PC-9 (cell line): ENCODE measurements at regions of chr19 and their contacts with region 1.

Region 1: GRCh38 chr19:40425450-40426287 is at the start of gene SERTAD1:
- DNase-seq: peak; percentile 96 to 99
- H3K4me3 ChIP-seq: peak within 1 kb of the TSS; percentile 87
- H3K27ac ChIP-seq: peak within 1 kb of the TSS; percentile 92
- H3K4me1 ChIP-seq: peaks cover 12% of the 10 kb centered on the region
- H3K27me3 ChIP-seq: no peaks in the 10 kb centered on the region
- CTCF ChIP-seq: peak; percentile 81
- total RNA-seq, gene SERTAD1: 7.8 and 8.5 TPM in 2 replicates

Region 2: GRCh38 chr19:40381321-40381720 is 44.3 kb before region 1 on chr19:
- CTCF ChIA-PET with region 1: no interaction called
- POLR2A ChIA-PET with region 1: no interaction called
- intact Hi-C with region 1: no loop called
- DNase-seq: no peak
- H3K4me3 ChIP-seq: no peak overlapping the region
- H3K27ac ChIP-seq: no peak overlapping the region
- H3K4me1 ChIP-seq: no peaks in the 10 kb centered on the region
- H3K27me3 ChIP-seq: no peaks in the 10 kb centered on the region
- CTCF ChIP-seq: no peak; the same call in 1 of the 2 replicates

Region 3: DNA sequence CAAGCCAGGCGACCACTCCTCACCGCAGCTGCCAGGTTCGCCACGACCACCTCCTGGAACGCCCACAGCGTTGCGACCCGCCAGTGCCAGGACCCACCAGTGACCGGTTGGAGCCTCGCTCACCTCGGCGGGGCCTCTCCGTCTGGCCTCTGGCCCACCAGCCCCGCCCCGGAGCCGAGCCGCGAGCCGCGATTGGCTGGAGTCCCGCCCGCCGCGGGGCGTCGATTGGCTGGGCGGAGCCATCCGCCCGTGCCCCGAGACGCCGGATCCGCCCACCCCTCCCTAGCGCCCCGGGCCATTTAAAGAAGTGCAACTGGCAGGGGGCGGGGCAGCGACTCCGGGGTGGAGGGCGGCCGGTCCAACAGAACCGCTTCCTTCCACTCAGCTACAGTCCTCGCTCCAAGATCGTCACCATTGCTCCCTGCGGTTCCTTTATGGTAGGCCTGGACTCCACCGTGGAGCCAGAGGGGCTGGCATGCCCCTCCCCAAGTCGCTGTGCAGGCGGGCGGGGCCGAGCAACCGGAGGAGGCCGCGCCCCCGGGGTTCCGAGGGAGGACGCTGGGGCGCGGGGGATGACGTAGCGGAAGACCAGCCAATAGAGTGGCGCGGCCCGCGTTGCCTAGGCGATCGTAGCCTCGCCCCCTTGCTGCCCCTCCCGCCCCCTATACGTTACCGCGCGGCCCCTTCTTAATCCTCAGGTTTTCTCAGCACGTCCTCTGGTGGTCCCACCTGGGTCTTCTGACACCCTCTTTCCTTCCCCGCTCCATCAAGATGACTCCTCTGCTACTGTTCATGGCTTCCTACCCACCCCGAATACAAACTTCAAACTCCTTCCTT is 18.7 kb after region 1 on chr19 and contains the start of gene SERTAD3:
- CTCF ChIA-PET with region 1: interaction called, 12 read pairs
- POLR2A ChIA-PET with region 1: interaction called, 12 read pairs
- intact Hi-C with region 1: loop called (anchors 1 kb)
- DNase-seq: peak; percentile 75 to 98
- H3K4me3 ChIP-seq: peak within 1 kb of the TSS; percentile 75
- H3K27ac ChIP-seq: peak within 1 kb of the TSS; percentile 70
- H3K4me1 ChIP-seq: peaks cover 12% of the 10 kb centered on the region
- H3K27me3 ChIP-seq: no peaks in the 10 kb centered on the region
- CTCF ChIP-seq: no peak
- total RNA-seq, gene SERTAD3: 35.9 and 41.4 TPM in 2 replicates

Region 4: DNA sequence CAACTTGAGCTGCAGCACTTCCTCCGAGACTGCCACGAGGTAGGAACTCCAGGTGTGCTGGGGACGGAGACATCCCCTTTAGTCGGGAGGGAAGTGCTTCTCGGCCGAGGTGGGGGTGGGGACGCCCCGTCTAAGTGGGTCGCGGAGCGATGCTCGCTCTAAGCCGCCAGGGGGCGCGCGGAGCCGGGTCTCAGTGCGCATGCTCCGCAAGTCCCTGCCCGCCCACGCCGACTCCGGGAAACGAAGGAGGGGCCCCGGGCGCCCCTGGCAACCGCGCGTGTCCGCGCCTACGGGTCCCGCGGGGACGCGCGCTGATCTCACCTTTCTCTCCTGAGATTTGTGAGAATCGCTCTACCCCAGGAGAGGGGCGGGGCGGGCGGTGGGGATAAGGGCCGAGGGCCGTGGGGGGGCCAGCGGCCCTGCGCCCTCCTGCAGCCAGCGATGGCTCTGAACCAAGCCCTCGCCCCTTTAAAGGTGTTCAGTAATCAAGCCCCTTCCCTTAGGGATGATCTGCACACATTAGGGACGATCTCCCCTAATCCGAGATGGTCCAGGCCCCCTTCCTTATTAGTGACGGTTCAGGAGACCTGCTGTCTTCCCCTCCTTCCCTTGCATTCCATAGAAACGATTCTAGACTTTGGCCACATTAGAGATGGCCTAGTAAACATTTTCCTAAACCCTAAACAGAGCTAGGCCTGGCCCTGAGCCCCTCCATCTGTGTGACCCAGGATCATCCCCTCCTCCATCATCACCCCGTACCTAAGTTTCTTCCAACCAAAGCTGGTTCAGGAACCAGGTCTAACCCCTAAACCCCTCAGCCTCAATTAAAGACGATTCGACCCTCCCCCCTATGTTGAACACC is 103.7 kb after region 1 on chr19:
- CTCF ChIA-PET with region 1: no interaction called
- POLR2A ChIA-PET with region 1: interaction called, 3 read pairs
- intact Hi-C with region 1: loop called (anchors 10 kb)
- DNase-seq: peak; percentile 65 to 87
- H3K4me3 ChIP-seq: peak overlapping the region; percentile 54
- H3K27ac ChIP-seq: no peak overlapping the region
- H3K4me1 ChIP-seq: no peaks in the 10 kb centered on the region
- H3K27me3 ChIP-seq: no peaks in the 10 kb centered on the region; the same call in 1 of the 2 replicates
- CTCF ChIP-seq: peak; percentile 96

Region 5: GRCh38 chr19:40716655-40717324 is 291.1 kb after region 1 on chr19 and contains the starts of genes COQ8B and ITPKC:
- CTCF ChIA-PET with region 1: interaction called, 4 read pairs
- POLR2A ChIA-PET with region 1: no interaction called
- intact Hi-C with region 1: loop called (anchors 5 kb)
- DNase-seq: peak; percentile 94 to 99
- H3K4me3 ChIP-seq: peak within 1 kb of the TSS; percentile 75
- H3K27ac ChIP-seq: peak within 1 kb of the TSS; percentile 99
- H3K4me1 ChIP-seq: peaks cover 27% of the 10 kb centered on the region
- H3K27me3 ChIP-seq: no peaks in the 10 kb centered on the region
- CTCF ChIP-seq: no peak
- total RNA-seq, gene COQ8B: 57.7 and 66.6 TPM in 2 replicates
- total RNA-seq, gene ITPKC: 17.6 and 22.1 TPM in 2 replicates

Region 6: DNA sequence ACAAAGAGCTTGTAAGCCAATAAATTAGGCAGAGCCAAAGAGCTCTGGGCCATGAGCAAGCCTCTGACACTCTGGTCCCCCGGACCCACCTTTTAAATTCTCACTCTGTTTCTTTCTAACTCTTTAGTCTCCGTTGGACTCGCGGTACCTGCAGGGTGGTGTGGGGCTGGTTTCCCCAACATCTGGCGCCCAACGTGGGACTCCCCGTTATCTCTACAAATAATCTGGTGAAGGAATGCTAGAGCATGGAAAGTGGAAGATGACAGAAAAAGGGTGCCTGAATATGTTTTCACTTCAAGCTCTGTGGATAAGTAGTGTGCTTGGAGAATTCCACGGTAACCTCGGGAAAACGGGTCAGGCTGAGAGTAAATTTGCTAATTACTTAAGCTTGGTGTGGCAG is 528.9 kb after region 1 on chr19:
- CTCF ChIA-PET with region 1: no interaction called
- POLR2A ChIA-PET with region 1: no interaction called
- intact Hi-C with region 1: no loop called
- DNase-seq: no peak
- H3K4me3 ChIP-seq: no peak overlapping the region
- H3K27ac ChIP-seq: no peak overlapping the region
- H3K4me1 ChIP-seq: no peaks in the 10 kb centered on the region
- H3K27me3 ChIP-seq: no peaks in the 10 kb centered on the region; the same call in 1 of the 2 replicates
- CTCF ChIP-seq: no peak